Naive thymus-derived CD4-positive, alpha-beta T cell (primary cell): ENCODE measurements at regions of chr9 and their contacts with region 1.

Region 1: DNA sequence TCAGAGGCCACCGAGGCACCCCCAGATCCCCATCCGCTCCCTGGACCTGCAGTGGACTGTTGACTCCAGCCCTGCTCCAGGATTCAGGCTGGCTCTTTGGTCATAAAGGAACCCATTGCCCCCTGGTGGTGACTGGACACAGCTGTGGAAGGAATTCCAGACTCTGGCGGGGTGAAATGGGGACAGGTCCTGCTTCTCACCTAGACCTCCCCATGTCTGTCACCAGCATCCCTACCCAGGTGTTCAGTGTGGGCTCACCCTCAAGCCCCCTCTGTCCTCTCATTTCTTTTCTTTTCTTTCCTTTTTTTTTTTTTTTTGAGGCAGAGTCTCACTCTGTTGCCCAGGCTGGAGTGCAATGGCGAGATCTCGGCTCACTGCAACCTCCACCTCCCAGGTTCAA is 25.5 kb upstream of the STXBP1 start:
- DNase-seq: peak; percentile 24 to 60 (median 53)
- ATAC-seq: peak; percentile 79
- H3K4me3 ChIP-seq: no peak overlapping the region
- H3K4me3 Mint-ChIP-seq: no peak overlapping the region
- H3K27ac ChIP-seq: no peak overlapping the region
- H3K27ac Mint-ChIP-seq: peak overlapping the region in 1 of 9 donors; percentile 56
- H3K4me1 ChIP-seq: no peaks in the 10 kb centered on the region
- H3K4me1 Mint-ChIP-seq: peaks cover 0 to 16% (median 0%) of the 10 kb centered on the region in 7 donors
- H3K27me3 ChIP-seq: no peaks in the 10 kb centered on the region
- H3K27me3 Mint-ChIP-seq: peaks cover 0 to 22% (median 5%) of the 10 kb centered on the region in 5 donors

Region 2: DNA sequence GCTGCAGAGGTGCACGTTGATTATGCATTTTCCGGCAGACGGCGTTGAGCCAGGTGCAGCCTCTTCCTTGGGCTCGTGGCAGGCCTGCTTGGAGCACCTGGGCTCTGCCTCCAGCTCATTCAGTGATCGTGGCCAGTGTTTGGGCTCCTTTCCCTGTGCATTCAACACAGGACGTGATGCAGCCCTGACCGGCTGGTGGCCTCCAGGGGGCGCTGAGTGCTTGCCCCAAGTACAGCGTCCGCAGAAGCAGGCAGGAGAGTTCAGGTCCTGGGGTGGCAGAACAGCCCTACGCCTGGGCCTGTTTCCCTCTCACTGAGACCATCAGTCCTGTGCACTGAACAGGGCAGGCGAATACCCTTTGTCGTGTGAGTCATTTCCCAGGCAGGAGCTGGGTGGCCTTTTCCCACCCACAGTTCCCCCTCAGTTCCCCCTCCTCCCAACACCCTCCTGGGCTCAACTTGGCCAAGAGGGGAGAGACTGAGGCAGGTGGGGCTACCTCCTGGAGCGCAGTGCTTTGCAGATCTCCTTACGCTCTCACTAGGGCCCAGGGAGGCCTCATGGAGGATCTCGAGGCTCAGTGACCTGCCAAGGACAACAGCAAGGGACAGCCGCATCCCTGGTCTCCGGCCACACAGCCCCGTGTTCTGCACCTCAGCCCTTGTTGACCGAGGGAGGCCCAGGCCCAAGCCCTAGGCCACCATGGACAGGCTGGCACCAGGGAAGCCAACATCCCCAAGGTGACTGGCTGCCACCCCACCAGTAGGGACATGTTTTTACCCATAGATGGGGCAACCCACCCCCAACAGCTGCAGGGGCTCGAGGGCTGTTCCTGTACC is 82.4 kb before region 1 on chr9:
- CTCF ChIA-PET with region 1: interaction called, 18 read pairs
- POLR2A ChIA-PET with region 1: no interaction called
- intact Hi-C with region 1: loop called in 1 of 2 experiments (anchors 1 kb)
- DNase-seq: peak; percentile 65 to 81 (median 75)
- ATAC-seq: peak; percentile 87
- H3K4me3 ChIP-seq: no peak overlapping the region
- H3K4me3 Mint-ChIP-seq: no peak overlapping the region
- H3K27ac ChIP-seq: no peak overlapping the region
- H3K27ac Mint-ChIP-seq: peak overlapping the region in 1 of 9 donors; percentile 69
- H3K4me1 ChIP-seq: no peaks in the 10 kb centered on the region
- H3K4me1 Mint-ChIP-seq: peaks cover 0 to 4% (median 0%) of the 10 kb centered on the region in 7 donors
- H3K27me3 ChIP-seq: no peaks in the 10 kb centered on the region
- H3K27me3 Mint-ChIP-seq: no peaks in the 10 kb centered on the region

Region 3: DNA sequence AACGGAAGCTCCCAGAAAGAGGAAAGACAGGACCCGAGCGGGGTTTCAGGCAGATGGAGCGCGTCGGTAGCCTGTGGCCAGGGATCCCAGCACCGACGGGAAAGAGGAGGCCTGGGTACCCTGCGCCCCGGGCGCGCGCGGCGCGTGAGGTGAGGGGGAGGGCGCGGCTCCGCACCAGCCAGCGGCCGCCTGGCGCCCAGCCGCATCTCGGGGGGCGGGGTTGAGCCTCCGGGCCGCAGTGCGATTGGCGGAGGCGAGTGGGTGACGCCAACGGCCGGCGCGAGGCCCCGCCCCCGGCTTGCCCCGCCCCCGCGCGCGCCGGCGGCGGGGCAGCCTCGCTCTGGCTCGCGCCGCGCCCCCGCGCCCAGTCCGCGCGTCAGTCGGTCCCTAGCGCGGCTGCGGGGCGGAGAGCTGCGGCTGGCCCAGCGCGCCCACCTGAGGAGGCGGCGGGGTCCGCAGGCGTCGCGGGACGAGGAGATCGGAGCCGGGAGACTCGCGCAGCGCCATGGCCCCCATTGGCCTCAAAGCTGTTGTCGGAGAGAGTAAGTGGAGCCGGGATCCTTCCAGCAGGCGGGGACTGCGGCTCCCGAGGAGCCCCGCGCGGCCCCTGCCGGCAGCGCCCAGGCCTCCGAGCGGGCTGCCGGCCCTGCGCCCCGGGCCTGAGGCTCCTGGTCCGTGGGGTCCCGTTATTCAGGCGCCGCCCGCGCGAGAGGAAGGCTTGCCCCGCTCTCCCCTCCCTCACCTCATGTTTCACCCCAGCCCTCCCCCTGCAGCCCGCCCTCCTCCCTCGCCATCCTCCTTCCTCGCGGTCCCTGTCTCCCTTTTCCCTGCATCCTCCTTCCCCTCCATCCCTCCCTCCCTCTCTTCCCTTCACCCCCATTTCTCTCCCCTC is 25.6 kb after region 1 on chr9 and contains the start of gene STXBP1:
- CTCF ChIA-PET with region 1: interaction called, 4 read pairs
- POLR2A ChIA-PET with region 1: no interaction called
- intact Hi-C with region 1: loop called in 1 of 2 experiments (anchors 2 kb)
- DNase-seq: peak; percentile 68 to 96 (median 79)
- ATAC-seq: peak; percentile 93
- H3K4me3 ChIP-seq: peak within 1 kb of the TSS; percentile 89
- H3K4me3 Mint-ChIP-seq: peak within 1 kb of the TSS; percentile 90 to 99 (median 96)
- H3K27ac ChIP-seq: peak within 1 kb of the TSS; percentile 51
- H3K27ac Mint-ChIP-seq: peak within 1 kb of the TSS; percentile 66 to 93 (median 86)
- H3K4me1 ChIP-seq: peaks cover 11 to 16% of the 10 kb centered on the region in 2 donors
- H3K4me1 Mint-ChIP-seq: peaks cover 32 to 42% (median 37%) of the 10 kb centered on the region in 7 donors
- H3K27me3 ChIP-seq: no peaks in the 10 kb centered on the region
- H3K27me3 Mint-ChIP-seq: peaks cover 0 to 40% (median 17%) of the 10 kb centered on the region in 5 donors
- total RNA-seq, gene STXBP1: 6.7 to 17.8 (median 14.1) TPM

Region 4: GRCh38 chr9:127779136-127779981 is 192.8 kb after region 1 on chr9:
- CTCF ChIA-PET with region 1: interaction called, 5 read pairs
- POLR2A ChIA-PET with region 1: no interaction called
- intact Hi-C with region 1: loop called in 1 of 2 experiments (anchors 2 kb)
- DNase-seq: peak in 1 of 9 donors; percentile 64
- ATAC-seq: peak; percentile 39
- H3K4me3 ChIP-seq: peak overlapping the region; percentile 97
- H3K4me3 Mint-ChIP-seq: peak overlapping the region; percentile 94 to 100 (median 98)
- H3K27ac ChIP-seq: peak overlapping the region; percentile 88
- H3K27ac Mint-ChIP-seq: peak overlapping the region; percentile 88 to 98 (median 94)
- H3K4me1 ChIP-seq: peaks cover 51 to 59% of the 10 kb centered on the region in 2 donors
- H3K4me1 Mint-ChIP-seq: peaks cover 32 to 76% (median 60%) of the 10 kb centered on the region in 7 donors
- H3K27me3 ChIP-seq: no peaks in the 10 kb centered on the region
- H3K27me3 Mint-ChIP-seq: no peaks in the 10 kb centered on the region